Activated CD4-positive, alpha-beta T cell treated with anti-CD3 and anti-CD28 coated beads for 36 hours (primary cell): ENCODE measurements at regions of chr2 and their contacts with region 1.

Region 1: GRCh38 chr2:224894356-224894755 is 147.9 kb downstream of the DOCK10 start:
- DNase-seq: no peak
- ATAC-seq: peak; percentile 54
- H3K4me3 Mint-ChIP-seq: no peak overlapping the region
- H3K27ac Mint-ChIP-seq: peak overlapping the region; percentile 82
- H3K4me1 Mint-ChIP-seq: peaks cover 54% of the 10 kb centered on the region
- H3K27me3 Mint-ChIP-seq: no peaks in the 10 kb centered on the region

Region 2: DNA sequence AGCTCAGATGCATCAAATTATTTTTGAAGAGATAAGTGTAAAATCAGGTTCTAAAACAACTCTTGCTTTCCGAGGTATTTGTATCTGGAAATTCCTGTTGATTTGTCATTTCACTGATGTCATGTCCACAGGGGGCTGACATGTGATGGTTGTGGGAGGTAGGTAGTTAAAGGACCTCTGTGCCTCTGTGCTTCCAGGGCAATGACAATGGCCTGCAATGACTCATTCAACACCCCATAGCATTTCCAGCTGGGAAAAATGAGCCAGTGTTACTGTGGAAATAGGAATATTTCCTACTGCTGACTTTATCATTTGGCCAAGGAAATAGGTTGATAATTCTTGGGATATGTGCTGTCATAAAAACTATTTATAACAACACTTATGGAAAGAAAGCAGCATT is 91.9 kb before region 1 on chr2:
- CTCF ChIA-PET with region 1: no interaction called
- POLR2A ChIA-PET with region 1: no interaction called
- intact Hi-C with region 1: no loop called
- DNase-seq: no peak
- ATAC-seq: no peak
- H3K4me3 Mint-ChIP-seq: no peak overlapping the region
- H3K27ac Mint-ChIP-seq: no peak overlapping the region
- H3K4me1 Mint-ChIP-seq: no peaks in the 10 kb centered on the region
- H3K27me3 Mint-ChIP-seq: no peaks in the 10 kb centered on the region

Region 3: DNA sequence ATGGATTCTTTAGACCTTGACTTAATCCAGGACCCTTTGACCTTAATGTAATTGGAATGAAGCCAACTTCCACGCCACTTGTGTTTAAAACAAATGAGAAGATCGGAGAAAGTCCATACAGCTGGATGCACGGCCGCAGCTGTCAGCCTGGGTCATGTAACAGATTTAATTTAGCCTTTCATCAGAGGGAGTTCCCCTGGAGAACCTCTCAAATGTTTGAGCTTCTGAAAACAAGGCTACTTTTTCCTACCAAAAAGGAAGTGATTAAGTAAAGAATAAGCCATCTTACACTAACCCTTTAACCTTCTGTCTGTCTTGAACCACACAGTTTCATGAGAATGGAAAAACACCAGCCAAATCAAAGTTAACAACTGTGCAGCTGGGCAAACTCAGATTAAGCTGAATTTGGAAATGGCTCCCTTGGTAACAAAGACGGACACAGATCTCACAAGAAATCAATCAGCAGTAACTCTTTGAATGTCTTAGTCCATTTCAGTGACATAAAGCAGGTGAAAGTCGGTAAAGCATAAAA is 44.4 kb after region 1 on chr2:
- CTCF ChIA-PET with region 1: no interaction called
- POLR2A ChIA-PET with region 1: no interaction called
- intact Hi-C with region 1: loop called in 1 of 2 experiments (anchors 2 kb)
- DNase-seq: peak; percentile 54
- ATAC-seq: peak; percentile 72
- H3K4me3 Mint-ChIP-seq: peak overlapping the region; percentile 68
- H3K27ac Mint-ChIP-seq: peak overlapping the region; percentile 92
- H3K4me1 Mint-ChIP-seq: peaks cover 85% of the 10 kb centered on the region
- H3K27me3 Mint-ChIP-seq: no peaks in the 10 kb centered on the region

Region 4: GRCh38 chr2:225438248-225438647 is 543.9 kb after region 1 on chr2:
- CTCF ChIA-PET with region 1: no interaction called
- POLR2A ChIA-PET with region 1: no interaction called
- intact Hi-C with region 1: no loop called
- DNase-seq: no peak
- ATAC-seq: no peak
- H3K4me3 Mint-ChIP-seq: no peak overlapping the region
- H3K27ac Mint-ChIP-seq: no peak overlapping the region
- H3K4me1 Mint-ChIP-seq: no peaks in the 10 kb centered on the region
- H3K27me3 Mint-ChIP-seq: peaks cover 20% of the 10 kb centered on the region